K562 (cell line): ENCODE measurements at regions of chr1 and their contacts with region 1.

Region 1: GRCh38 chr1:6624710-6625583 is at the start of gene THAP3:
- DNase-seq: peak; percentile 93 to 96 (median 94)
- ATAC-seq: peak; percentile 97
- H3K4me3 ChIP-seq: peak within 1 kb of the TSS; percentile 91
- H3K27ac ChIP-seq: peak within 1 kb of the TSS; percentile 74
- H3K4me1 ChIP-seq: peaks cover 12 to 47% of the 10 kb centered on the region in 2 experiments; a peak in 4 of 5 replicates
- H3K27me3 ChIP-seq: no peaks in the 10 kb centered on the region
- CTCF ChIP-seq: peak; percentile 20 to 29 (median 25); a peak in 3 of 6 replicates
- EP300 ChIP-seq: no peak
- POLR2A ChIP-seq: peak; percentile 79
- RAD21 ChIP-seq: peak in 1 of 2 experiments; percentile 30; a peak in 2 of 4 replicates
- polyA plus RNA-seq, gene THAP3: 1.9 to 7.0 TPM

Region 2: GRCh38 chr1:6613361-6614018 is 11.5 kb before region 1 on chr1 and contains the start of gene PHF13:
- CTCF ChIA-PET with region 1: no interaction called
- POLR2A ChIA-PET with region 1: interaction called, 11 read pairs
- in situ Hi-C with region 1: no loop called
- intact Hi-C with region 1: loop called (anchors 2 kb)
- DNase-seq: peak; percentile 91 to 100 (median 96)
- ATAC-seq: peak; percentile 91
- H3K4me3 ChIP-seq: peak within 1 kb of the TSS; percentile 97
- H3K27ac ChIP-seq: peak within 1 kb of the TSS; percentile 94
- H3K4me1 ChIP-seq: peaks cover 21 to 47% of the 10 kb centered on the region in 2 experiments
- H3K27me3 ChIP-seq: no peaks in the 10 kb centered on the region
- CTCF ChIP-seq: no peak; a peak in 1 of 6 replicates
- EP300 ChIP-seq: no peak
- POLR2A ChIP-seq: peak; percentile 78
- RAD21 ChIP-seq: no peak
- polyA plus RNA-seq, gene PHF13: 1.8 TPM

Region 3: DNA sequence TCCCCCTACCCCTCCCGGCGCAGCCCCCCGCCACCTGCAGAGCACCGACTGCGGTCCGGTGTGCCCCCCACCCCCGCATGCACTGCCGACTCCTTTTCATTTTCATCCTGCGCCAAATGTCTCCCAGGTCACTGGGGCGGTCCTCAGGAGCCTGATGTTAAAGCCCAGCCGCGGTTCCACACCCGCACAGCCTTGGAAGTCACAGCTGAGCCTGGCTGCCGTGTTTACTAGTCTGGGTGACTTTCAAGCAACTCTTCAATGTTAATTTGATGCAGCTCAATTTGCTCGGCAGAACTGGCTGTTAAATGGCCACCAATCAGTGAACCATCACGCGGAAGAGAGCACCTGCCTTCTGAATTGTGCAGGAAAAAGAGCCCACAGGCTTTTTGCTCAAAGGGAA is 27.0 kb after region 1 on chr1:
- CTCF ChIA-PET with region 1: no interaction called
- POLR2A ChIA-PET with region 1: no interaction called
- in situ Hi-C with region 1: no loop called
- intact Hi-C with region 1: no loop called
- DNase-seq: no peak
- ATAC-seq: no peak
- H3K4me3 ChIP-seq: no peak overlapping the region
- H3K27ac ChIP-seq: no peak overlapping the region
- H3K4me1 ChIP-seq: no peaks in the 10 kb centered on the region; a peak in 1 of 5 replicates
- H3K27me3 ChIP-seq: no peaks in the 10 kb centered on the region
- CTCF ChIP-seq: no peak
- EP300 ChIP-seq: no peak
- POLR2A ChIP-seq: no peak
- RAD21 ChIP-seq: no peak

Region 4: GRCh38 chr1:6691507-6691906 is 66.6 kb after region 1 on chr1:
- CTCF ChIA-PET with region 1: no interaction called
- POLR2A ChIA-PET with region 1: no interaction called
- in situ Hi-C with region 1: no loop called
- intact Hi-C with region 1: no loop called
- DNase-seq: no peak
- ATAC-seq: no peak
- H3K4me3 ChIP-seq: no peak overlapping the region
- H3K27ac ChIP-seq: no peak overlapping the region
- H3K4me1 ChIP-seq: peaks cover 0 to 10% of the 10 kb centered on the region in 2 experiments; a peak in 1 of 5 replicates
- H3K27me3 ChIP-seq: no peaks in the 10 kb centered on the region
- CTCF ChIP-seq: no peak
- EP300 ChIP-seq: no peak
- POLR2A ChIP-seq: no peak
- RAD21 ChIP-seq: no peak

Region 5: DNA sequence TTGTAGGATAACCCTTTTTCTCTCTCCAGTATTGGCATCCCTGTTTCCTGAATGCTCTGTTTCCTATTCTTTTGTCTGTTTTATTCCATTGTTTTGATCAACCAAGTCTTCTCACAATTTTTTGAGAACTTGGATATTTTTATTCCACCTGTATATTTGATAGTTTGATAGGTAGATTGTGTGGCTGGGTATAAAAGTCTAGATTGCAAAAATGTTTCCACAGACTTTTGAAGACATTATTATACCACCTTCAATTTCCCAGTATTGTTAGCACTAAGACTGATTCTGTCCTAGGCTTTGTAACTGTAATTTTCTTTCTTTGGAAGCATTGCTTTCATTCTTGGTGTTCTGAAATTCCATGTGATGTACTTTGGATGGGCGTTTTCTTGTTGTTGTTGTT is 86.2 kb after region 1 on chr1:
- CTCF ChIA-PET with region 1: no interaction called
- POLR2A ChIA-PET with region 1: no interaction called
- in situ Hi-C with region 1: no loop called
- intact Hi-C with region 1: no loop called
- DNase-seq: no peak
- ATAC-seq: no peak
- H3K4me3 ChIP-seq: no peak overlapping the region
- H3K27ac ChIP-seq: no peak overlapping the region
- H3K4me1 ChIP-seq: no peaks in the 10 kb centered on the region
- H3K27me3 ChIP-seq: peaks cover 30% of the 10 kb centered on the region in 2 experiments; a peak in 4 of 5 replicates
- CTCF ChIP-seq: no peak
- EP300 ChIP-seq: no peak
- POLR2A ChIP-seq: no peak
- RAD21 ChIP-seq: no peak

Region 6: GRCh38 chr1:6757719-6758435 is 132.9 kb after region 1 on chr1:
- CTCF ChIA-PET with region 1: no interaction called
- POLR2A ChIA-PET with region 1: no interaction called
- in situ Hi-C with region 1: no loop called
- intact Hi-C with region 1: no loop called
- DNase-seq: peak in 1 of 4 experiments; percentile 37
- ATAC-seq: peak; percentile 86
- H3K4me3 ChIP-seq: peak overlapping the region; percentile 3; the same call in 1 of the 2 replicates
- H3K27ac ChIP-seq: no peak overlapping the region
- H3K4me1 ChIP-seq: peaks cover 3 to 9% of the 10 kb centered on the region in 2 experiments; a peak in 3 of 5 replicates
- H3K27me3 ChIP-seq: peaks cover 30 to 67% of the 10 kb centered on the region in 2 experiments
- CTCF ChIP-seq: no peak
- EP300 ChIP-seq: no peak
- POLR2A ChIP-seq: no peak
- RAD21 ChIP-seq: no peak; a peak in 1 of 4 replicates